Mammary epithelial cell (primary cell): ENCODE measurements at regions of chr2 and their contacts with region 1.

Region 1: DNA sequence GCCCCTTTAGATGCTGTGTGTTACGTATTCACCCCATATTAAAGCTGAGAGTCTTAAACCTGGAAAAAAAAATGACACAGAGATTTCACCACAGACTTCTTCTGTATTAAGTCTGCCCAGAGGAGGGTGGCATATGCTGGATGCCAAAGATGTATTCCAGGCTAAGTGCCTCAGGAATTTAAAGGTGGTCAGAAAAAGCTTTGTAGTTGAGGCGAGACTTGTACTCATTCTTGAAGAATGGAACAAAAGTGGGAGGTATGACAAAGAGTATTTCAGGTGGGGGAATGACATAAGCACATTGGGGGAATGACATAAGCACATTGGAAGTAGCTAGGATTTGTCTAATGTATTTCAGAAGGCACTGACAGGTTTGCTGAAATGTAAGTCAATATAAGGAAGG is 98.6 kb downstream of the BABAM2 start:
- DNase-seq: peak; percentile 97
- H3K4me3 ChIP-seq: no peak overlapping the region
- H3K27ac ChIP-seq: peak overlapping the region; percentile 87
- H3K4me1 ChIP-seq: peaks cover 41% of the 10 kb centered on the region
- H3K27me3 ChIP-seq: no peaks in the 10 kb centered on the region
- CTCF ChIP-seq: peak in 1 of 2 donors; percentile 6

Region 2: GRCh38 chr2:27638037-27638637 is 351.0 kb before region 1 on chr2:
- CTCF ChIA-PET with region 1: no interaction called
- dilution Hi-C with region 1: no loop called
- in situ Hi-C with region 1: no loop called
- intact Hi-C with region 1: no loop called
- DNase-seq: peak; percentile 97
- H3K4me3 ChIP-seq: no peak overlapping the region
- H3K27ac ChIP-seq: peak overlapping the region; percentile 94
- H3K4me1 ChIP-seq: peaks cover 29% of the 10 kb centered on the region
- H3K27me3 ChIP-seq: no peaks in the 10 kb centered on the region
- CTCF ChIP-seq: no peak

Region 3: DNA sequence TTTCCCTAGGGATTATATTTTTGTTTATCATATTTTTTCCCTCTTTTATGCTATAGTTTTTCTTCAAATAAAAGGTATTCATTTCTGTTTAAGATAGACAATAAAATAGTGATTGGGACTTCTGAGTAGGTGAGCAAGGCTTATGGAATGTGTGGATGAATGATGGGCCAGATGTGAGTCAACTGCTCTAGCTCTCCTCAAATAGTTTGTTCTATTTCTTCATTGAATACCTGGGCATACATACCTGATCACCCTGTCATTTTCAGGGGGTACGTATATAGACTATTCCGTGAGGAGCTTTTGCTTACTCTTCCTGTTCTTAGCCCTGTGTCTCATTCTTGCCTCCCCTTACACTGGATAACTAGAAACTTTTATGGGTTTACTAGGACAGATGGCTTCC is 56.7 kb before region 1 on chr2:
- CTCF ChIA-PET with region 1: no interaction called
- dilution Hi-C with region 1: loop called (anchors 5 kb)
- in situ Hi-C with region 1: no loop called
- intact Hi-C with region 1: no loop called
- DNase-seq: peak; percentile 78
- H3K4me3 ChIP-seq: peak overlapping the region in 1 of 3 experiments; percentile 5
- H3K27ac ChIP-seq: peak overlapping the region; percentile 90
- H3K4me1 ChIP-seq: peaks cover 15% of the 10 kb centered on the region
- H3K27me3 ChIP-seq: no peaks in the 10 kb centered on the region
- CTCF ChIP-seq: no peak

Region 4: DNA sequence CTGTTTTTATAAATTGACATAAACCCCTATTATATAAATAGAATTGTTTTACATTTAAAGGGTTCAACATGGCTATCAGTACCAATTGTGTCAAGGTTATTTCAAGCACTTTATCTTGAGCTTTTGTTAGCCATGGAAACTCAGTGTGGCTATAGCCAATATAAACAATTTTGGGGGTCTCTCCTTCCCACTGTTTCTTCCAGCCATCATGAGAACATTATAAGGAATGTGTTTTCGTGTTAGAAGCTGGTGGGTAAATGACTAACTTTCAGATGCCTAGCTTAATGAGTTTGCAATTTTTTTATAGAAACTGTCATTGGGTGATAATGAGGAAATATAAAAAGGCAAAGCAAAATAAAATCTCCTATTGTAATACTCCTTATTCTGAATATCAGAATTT is 250.1 kb after region 1 on chr2:
- CTCF ChIA-PET with region 1: no interaction called
- dilution Hi-C with region 1: no loop called
- in situ Hi-C with region 1: no loop called
- intact Hi-C with region 1: no loop called
- DNase-seq: no peak
- H3K4me3 ChIP-seq: no peak overlapping the region
- H3K27ac ChIP-seq: no peak overlapping the region
- H3K4me1 ChIP-seq: no peaks in the 10 kb centered on the region
- H3K27me3 ChIP-seq: no peaks in the 10 kb centered on the region
- CTCF ChIP-seq: no peak

Region 5: DNA sequence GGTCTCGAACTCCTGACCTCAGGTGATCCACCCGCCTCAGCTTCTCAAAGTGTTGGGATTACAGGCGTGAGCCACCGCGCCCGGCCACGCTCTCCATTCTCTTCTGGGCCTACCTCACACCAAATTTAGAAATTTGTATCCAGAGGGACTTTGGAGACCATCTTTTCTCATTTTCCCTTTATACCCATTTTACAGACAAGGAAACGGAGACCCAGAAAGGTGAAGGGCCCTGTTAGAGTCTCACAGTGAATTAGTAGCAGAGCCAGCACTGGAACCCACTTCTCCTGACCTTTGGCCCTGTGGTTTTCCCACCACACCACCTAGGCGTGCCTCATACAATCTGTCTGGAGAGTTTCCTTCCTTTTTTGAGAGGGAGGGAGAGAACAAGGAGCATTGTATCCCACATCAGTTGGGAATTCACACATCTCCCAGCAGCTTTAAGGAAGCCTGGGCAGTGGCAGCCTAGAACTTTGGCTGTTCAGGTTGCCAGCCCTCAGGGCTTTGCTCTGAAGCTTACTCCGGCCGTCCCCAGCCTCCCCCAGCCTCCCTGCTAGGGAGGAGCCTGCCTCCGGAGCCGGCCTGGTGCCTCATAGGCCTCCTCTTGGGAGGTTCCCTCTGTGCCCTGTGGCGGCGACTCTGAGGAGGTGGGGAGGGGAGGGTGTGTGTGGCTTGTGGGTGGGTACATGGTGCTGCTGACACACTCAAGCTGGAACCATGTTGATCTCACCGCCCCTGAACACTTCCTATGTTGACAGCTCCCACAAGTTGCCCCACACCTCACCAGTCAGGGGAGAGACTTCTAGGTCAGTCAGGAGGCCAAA is 417.3 kb after region 1 on chr2:
- CTCF ChIA-PET with region 1: no interaction called
- dilution Hi-C with region 1: loop called (anchors 5 kb)
- in situ Hi-C with region 1: no loop called
- intact Hi-C with region 1: no loop called
- DNase-seq: peak; percentile 89
- H3K4me3 ChIP-seq: no peak overlapping the region
- H3K27ac ChIP-seq: peak overlapping the region; percentile 26
- H3K4me1 ChIP-seq: peaks cover 59% of the 10 kb centered on the region
- H3K27me3 ChIP-seq: no peaks in the 10 kb centered on the region
- CTCF ChIP-seq: no peak